ENCODE measurements at regions of chr20 and their contacts with region 1.

Region 1: GRCh38 chr20:9609887-9610502 is 95.6 kb downstream of the LAMP5 start:
- DNase-seq: no peak
- H3K4me3 ChIP-seq: no peak overlapping the region
- H3K27ac ChIP-seq: no peak overlapping the region
- H3K4me1 ChIP-seq: no peaks in the 10 kb centered on the region
- H3K27me3 ChIP-seq: peaks cover 18% of the 10 kb centered on the region
- CTCF ChIP-seq: peak; percentile 80

Region 2: DNA sequence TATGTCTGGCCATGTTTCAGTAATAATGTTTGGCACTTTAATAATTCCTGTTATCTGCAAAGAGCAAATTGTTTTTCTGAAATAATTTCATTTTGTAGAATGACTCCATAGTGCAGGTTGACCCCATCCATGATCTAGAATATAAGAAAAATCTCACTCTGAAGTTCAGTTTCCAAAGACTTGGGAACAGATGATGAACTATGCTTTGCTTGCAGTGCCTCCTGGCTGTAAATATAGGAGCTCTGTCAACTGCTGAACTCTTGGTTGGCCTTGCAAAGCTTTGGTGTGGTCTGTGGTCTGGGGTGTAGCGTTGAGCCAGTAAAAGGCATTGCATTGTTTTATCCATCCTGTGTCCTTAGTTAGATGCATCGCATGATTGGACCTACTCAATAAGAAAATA is 437.1 kb before region 1 on chr20:
- intact Hi-C with region 1: no loop called
- DNase-seq: no peak
- H3K4me3 ChIP-seq: no peak overlapping the region
- H3K27ac ChIP-seq: peak overlapping the region; percentile 9
- H3K4me1 ChIP-seq: peaks cover 35% of the 10 kb centered on the region
- H3K27me3 ChIP-seq: no peaks in the 10 kb centered on the region
- CTCF ChIP-seq: peak; percentile 54

Region 3: DNA sequence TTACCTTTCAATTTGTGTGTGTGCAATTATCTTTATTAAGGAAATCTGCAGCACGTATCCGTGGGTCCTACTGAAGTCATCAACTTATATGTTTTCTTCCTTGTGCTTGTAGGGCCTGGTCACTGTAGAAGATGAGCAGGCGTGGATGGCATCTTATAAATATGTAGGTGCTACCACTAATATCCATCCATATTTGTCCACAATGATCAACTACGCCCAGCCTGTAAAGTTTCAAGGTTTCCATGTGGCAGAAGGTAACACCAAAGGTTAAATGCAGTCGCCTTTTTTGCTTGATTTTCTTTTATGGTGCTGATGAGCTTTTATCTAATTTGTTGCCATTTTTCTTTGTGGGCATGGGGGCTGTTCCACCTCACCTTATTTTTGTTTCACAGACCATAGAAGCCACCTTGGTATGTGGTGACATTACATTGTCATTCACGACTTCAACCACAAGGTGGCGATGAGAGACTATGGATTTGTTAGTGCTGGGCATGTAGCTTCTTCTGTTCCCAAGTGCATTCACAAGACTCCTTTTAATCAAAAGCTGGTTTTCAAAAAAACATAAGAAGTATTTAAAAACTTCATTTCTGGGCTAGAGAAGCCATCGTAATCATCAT is 202.1 kb before region 1 on chr20:
- intact Hi-C with region 1: loop called (anchors 2 kb)
- DNase-seq: no peak
- H3K4me3 ChIP-seq: no peak overlapping the region
- H3K27ac ChIP-seq: no peak overlapping the region
- H3K4me1 ChIP-seq: no peaks in the 10 kb centered on the region
- H3K27me3 ChIP-seq: no peaks in the 10 kb centered on the region
- CTCF ChIP-seq: peak; percentile 87

Region 4: DNA sequence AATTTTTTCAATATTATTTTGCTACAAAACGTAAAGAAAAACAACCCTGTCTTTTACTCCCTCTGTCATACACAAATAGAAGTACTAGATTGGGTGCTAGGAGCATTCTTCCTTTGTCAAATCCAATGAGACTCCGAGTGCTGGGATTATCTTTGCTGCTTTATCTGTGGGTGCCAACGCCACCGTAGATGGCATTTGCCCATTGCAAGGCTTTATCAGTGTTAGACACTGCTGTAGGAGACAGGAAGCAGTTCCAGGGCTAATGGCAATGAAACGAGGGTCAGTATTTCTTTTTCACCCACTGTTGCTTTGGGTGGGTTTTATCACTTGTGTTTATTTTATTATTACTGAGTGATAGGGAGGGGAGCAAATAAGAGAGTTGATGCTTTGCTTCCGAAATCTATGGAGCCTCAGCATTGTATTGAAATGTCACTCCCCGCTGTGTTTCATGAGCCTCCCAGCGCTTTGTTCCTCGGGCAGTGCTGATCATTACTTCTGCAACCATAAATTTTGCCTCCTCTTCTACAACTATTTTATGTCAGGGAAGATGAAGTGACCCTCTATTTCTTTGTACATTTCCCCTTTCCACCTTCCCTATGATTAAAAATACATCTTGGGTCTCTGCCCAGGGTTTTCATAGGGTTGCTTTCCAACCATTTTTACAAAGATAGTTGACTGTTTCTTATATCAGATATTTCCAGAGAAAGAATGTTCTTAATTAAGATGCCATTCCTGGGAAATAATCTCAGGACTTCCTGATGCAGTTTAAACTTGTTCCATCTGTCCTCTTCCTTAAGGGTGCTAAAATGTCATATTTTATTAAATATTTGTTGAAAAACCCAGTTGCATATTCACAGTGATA is 182.3 kb before region 1 on chr20:
- intact Hi-C with region 1: loop called (anchors 5 kb)
- DNase-seq: no peak
- H3K4me3 ChIP-seq: no peak overlapping the region
- H3K27ac ChIP-seq: no peak overlapping the region
- H3K4me1 ChIP-seq: peaks cover 15% of the 10 kb centered on the region
- H3K27me3 ChIP-seq: no peaks in the 10 kb centered on the region
- CTCF ChIP-seq: no peak

Region 5: GRCh38 chr20:9710685-9711084 is 100.7 kb after region 1 on chr20:
- intact Hi-C with region 1: no loop called
- DNase-seq: no peak
- H3K4me3 ChIP-seq: no peak overlapping the region
- H3K27ac ChIP-seq: no peak overlapping the region
- H3K4me1 ChIP-seq: no peaks in the 10 kb centered on the region
- H3K27me3 ChIP-seq: no peaks in the 10 kb centered on the region
- CTCF ChIP-seq: no peak